WTC11 (cell line): ENCODE measurements at regions of chr12 and their contacts with region 1.

Region 1: DNA sequence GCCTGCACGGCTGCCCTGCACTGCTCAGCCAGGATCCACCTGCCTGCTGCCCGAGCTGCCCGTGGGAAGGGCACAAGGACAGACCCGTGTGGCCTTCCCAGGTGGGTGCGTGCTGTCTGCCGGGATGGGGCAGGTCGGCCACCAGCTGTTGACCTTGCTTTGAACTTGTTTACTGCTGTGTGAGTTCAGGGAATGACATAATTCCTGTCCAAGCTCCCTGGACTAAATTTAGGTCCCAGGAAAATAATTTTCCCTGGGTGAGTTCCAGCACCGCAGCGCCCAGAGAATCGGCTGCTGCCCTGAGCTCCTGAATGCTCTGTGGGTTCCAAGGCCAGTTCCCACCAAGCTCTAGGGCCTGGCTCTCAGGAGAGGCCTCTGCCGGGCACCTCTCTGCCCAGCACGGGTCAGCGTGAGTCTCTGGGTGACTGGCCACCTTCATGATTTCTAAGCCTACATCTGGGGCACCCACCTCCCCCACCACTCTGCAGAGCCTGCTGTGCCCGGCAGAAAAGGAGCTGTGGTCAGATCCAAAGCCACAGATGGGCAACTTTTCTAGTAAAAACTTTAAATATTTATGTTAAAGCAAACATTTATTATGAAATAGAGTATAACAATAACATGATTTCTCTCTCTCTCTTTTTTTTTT is 27.2 kb upstream of the MLXIP start:
- DNase-seq: no peak
- ATAC-seq: no peak
- H3K4me3 Mint-ChIP-seq: no peak overlapping the region
- H3K27ac Mint-ChIP-seq: no peak overlapping the region
- H3K4me1 Mint-ChIP-seq: peaks cover 4% of the 10 kb centered on the region; the same call in 1 of the 2 replicates
- H3K27me3 Mint-ChIP-seq: no peaks in the 10 kb centered on the region
- CTCF ChIP-seq: no peak

Region 2: GRCh38 chr12:122064025-122064777 is 12.8 kb after region 1 on chr12:
- CTCF ChIA-PET with region 1: interaction called, 24 read pairs
- POLR2A ChIA-PET with region 1: no interaction called
- DNase-seq: peak; percentile 94
- ATAC-seq: peak; percentile 96
- H3K4me3 Mint-ChIP-seq: peak overlapping the region; percentile 73
- H3K27ac Mint-ChIP-seq: peak overlapping the region; percentile 95
- H3K4me1 Mint-ChIP-seq: peaks cover 35% of the 10 kb centered on the region
- H3K27me3 Mint-ChIP-seq: no peaks in the 10 kb centered on the region
- CTCF ChIP-seq: no peak

Region 3: DNA sequence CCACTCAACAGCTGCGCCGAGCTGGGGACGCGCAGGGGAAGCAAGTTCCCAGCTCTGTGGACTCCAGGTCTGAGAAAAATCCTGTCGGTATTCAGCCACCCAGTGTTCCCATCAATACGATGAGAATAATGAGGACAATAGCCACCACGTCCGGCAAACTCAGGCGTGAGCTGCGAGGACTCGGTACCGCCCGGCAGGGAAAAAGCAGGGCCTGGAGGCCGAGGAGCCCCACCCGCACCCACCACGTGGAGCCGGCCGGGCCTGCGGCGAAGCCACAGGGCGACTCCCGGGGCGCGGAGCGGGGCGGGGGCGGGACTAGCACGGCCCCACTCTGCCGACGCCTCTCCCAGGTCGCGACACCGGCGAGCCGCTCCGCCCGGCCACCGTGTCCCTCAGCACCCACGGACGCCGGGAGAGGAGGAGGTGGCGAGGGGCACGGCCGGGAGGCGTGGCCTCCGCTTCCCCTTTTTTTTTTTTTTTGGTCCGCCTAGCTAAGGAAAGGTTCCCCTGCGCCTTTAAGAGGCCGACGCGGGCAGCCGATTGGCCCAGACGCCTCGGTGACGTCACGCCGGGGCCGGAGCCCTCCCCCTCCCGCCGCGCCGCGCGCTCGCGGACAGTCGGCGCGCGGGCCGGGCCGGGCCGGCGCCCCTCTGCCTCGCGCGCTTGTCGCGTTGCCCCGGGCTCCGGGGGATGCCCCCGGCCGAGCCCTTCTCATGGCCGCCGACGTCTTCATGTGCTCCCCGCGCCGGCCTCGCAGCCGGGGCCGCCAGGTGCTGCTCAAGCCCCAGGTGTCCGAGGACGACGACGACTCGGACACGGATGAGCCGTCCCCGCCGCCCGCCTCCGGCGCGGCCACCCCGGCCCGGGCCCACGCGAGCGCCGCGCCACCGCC is 27.0 kb after region 1 on chr12 and contains the start of gene MLXIP:
- CTCF ChIA-PET with region 1: interaction called, 12 read pairs
- POLR2A ChIA-PET with region 1: no interaction called
- DNase-seq: peak; percentile 91
- ATAC-seq: peak; percentile 74
- H3K4me3 Mint-ChIP-seq: peak within 1 kb of the TSS; percentile 87
- H3K27ac Mint-ChIP-seq: no peak within 1 kb of the TSS
- H3K4me1 Mint-ChIP-seq: peaks cover 31% of the 10 kb centered on the region
- H3K27me3 Mint-ChIP-seq: peaks cover 8% of the 10 kb centered on the region
- CTCF ChIP-seq: no peak
- total RNA-seq, gene MLXIP: 40.5 to 49.4 TPM (median 44.4 TPM) in 3 replicates

Region 4: DNA sequence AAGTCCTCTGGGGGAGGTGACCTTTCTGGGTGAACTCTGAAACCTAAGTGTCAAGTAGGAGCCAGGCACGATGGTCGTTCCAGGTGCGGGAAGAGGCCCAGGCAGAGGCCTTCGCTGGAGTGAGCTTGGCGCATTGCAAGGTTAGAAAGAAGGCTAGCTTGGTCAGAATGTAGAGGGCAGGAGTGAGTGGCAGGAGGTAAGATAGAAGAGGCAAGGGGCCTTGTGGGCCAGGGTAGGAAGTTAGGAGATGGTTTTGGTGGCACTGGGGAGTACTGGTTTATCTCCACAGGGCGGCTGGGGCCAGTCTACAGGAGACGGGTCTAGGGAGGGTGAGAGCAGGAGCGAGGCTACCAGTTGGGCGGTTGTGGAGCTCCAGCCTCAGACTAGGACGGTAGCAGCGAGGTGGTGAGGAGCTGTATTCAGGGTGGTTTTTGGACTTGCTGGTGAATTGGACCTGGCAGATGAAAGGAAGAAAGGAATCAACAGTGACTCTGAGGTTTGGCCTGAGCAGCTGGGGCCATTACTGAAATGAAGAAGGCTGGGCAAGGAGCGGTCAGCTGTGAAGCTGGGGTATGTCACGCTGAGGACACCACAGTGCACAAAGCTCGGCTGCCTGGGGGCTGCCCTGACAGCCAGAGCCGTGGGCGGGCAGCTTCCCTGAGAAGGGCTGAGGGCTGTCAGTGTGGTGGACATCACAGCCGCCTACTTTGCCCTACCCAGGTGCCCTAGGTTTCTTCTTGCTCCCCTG is 36.3 kb after region 1 on chr12:
- CTCF ChIA-PET with region 1: interaction called, 12 read pairs
- POLR2A ChIA-PET with region 1: no interaction called
- DNase-seq: no peak
- ATAC-seq: no peak
- H3K4me3 Mint-ChIP-seq: no peak overlapping the region
- H3K27ac Mint-ChIP-seq: peak overlapping the region; percentile 54
- H3K4me1 Mint-ChIP-seq: peaks cover 27% of the 10 kb centered on the region
- H3K27me3 Mint-ChIP-seq: no peaks in the 10 kb centered on the region
- CTCF ChIP-seq: no peak

Region 5: DNA sequence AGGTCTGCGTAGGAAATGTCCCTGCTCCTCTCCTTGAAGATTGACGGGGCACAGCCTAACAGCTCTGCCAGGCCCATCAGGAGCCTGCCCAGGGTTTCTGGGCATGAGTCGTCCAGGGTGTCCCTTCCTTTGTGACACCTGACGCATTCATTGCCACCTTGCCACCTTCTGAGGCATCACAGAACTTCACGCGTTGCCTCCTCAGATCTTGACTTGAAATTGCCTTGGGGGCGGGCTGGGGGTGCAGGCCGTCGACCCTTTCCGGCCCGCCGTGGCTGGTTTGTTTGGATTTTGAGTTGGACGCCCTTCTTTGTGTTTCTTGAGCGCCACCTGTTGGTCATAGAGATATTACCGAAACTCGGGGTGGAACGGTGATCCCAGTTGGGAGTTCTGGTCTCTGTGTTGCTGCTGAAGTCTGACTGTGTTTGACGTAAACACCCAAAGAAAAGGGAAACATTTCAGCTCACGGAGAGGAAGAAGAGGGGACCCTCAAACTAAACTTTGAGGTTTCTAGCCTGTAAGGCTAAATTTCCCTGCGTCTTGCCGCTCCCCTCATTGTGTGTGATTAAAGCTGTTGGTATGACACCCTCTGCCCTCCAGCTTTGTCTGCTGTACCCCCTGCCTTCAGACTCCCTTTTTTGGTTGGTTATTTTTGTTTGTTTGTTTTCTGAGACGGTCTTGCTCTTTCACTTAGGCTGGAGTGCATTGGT is 71.9 kb after region 1 on chr12:
- CTCF ChIA-PET with region 1: interaction called, 48 read pairs
- POLR2A ChIA-PET with region 1: no interaction called
- DNase-seq: peak; percentile 86
- ATAC-seq: peak; percentile 51
- H3K4me3 Mint-ChIP-seq: peak overlapping the region; percentile 28; the same call in 1 of the 2 replicates
- H3K27ac Mint-ChIP-seq: peak overlapping the region; percentile 76
- H3K4me1 Mint-ChIP-seq: peaks cover 23% of the 10 kb centered on the region
- H3K27me3 Mint-ChIP-seq: no peaks in the 10 kb centered on the region
- CTCF ChIP-seq: peak; percentile 79

Region 6: GRCh38 chr12:122137681-122138080 is 86.3 kb after region 1 on chr12:
- CTCF ChIA-PET with region 1: interaction called, 15 read pairs
- POLR2A ChIA-PET with region 1: no interaction called
- DNase-seq: peak; percentile 82
- ATAC-seq: peak; percentile 94
- H3K4me3 Mint-ChIP-seq: peak overlapping the region; percentile 24; the same call in 1 of the 2 replicates
- H3K27ac Mint-ChIP-seq: no peak overlapping the region
- H3K4me1 Mint-ChIP-seq: 0 out of 2 replicates have a peak, but pooled peaks cover 6% of the 10 kb centered on the region
- H3K27me3 Mint-ChIP-seq: no peaks in the 10 kb centered on the region
- CTCF ChIP-seq: no peak